MCF 10A (cell line): ENCODE measurements at regions of chrX and their contacts with region 1.

Region 1: GRCh38 chrX:133958997-133959688 is 26.3 kb downstream of the GPC3 start:
- DNase-seq: peak; percentile 4
- H3K4me3 Mint-ChIP-seq: no peak overlapping the region
- H3K27ac Mint-ChIP-seq: no peak overlapping the region
- H3K4me1 Mint-ChIP-seq: no peaks in the 10 kb centered on the region
- H3K27me3 Mint-ChIP-seq: peaks cover 37% of the 10 kb centered on the region
- CTCF ChIP-seq: no peak

Region 2: DNA sequence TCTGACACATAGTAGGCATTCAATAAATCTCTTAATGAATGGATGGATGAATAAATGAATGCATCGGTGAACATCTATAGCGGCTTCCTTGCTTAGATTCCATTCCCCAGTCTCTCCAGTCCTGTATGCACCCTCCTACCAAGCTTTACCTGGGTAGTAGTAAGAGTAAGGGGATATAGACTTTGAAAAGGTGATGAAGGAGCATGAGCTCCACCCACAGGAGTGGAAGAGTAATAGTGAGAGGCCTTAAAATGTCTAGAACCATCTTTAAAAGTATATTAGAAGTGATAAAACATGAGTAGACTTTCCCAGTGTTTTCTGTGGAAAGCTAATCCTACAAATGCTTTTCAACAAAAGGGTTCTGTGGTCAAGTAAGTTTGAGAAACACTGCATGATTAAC is 61.8 kb after region 1 on chrX:
- CTCF ChIA-PET with region 1: interaction called, 11 read pairs
- POLR2A ChIA-PET with region 1: no interaction called
- intact Hi-C with region 1: loop called (anchors 2 kb)
- DNase-seq: peak; percentile 24
- H3K4me3 Mint-ChIP-seq: no peak overlapping the region
- H3K27ac Mint-ChIP-seq: no peak overlapping the region
- H3K4me1 Mint-ChIP-seq: no peaks in the 10 kb centered on the region
- H3K27me3 Mint-ChIP-seq: peaks cover 20% of the 10 kb centered on the region
- CTCF ChIP-seq: peak; percentile 19

Region 3: GRCh38 chrX:134144231-134144630 is 185.1 kb after region 1 on chrX:
- CTCF ChIA-PET with region 1: interaction called, 4 read pairs
- POLR2A ChIA-PET with region 1: no interaction called
- intact Hi-C with region 1: loop called (anchors 2 kb)
- DNase-seq: peak; percentile 36
- H3K4me3 Mint-ChIP-seq: no peak overlapping the region
- H3K27ac Mint-ChIP-seq: no peak overlapping the region
- H3K4me1 Mint-ChIP-seq: no peaks in the 10 kb centered on the region
- H3K27me3 Mint-ChIP-seq: peaks cover 34% of the 10 kb centered on the region
- CTCF ChIP-seq: peak; percentile 38